Calu3 (cell line): ENCODE measurements at regions of chr2 and their contacts with region 1.

Region 1: GRCh38 chr2:147331790-147332419 is 512.9 kb upstream of the ACVR2A start:
- DNase-seq: peak; percentile 53
- H3K4me3 Mint-ChIP-seq: no peak overlapping the region
- H3K27ac Mint-ChIP-seq: no peak overlapping the region
- H3K4me1 Mint-ChIP-seq: no peaks in the 10 kb centered on the region
- H3K27me3 Mint-ChIP-seq: no peaks in the 10 kb centered on the region
- CTCF ChIP-seq: peak; percentile 34

Region 2: DNA sequence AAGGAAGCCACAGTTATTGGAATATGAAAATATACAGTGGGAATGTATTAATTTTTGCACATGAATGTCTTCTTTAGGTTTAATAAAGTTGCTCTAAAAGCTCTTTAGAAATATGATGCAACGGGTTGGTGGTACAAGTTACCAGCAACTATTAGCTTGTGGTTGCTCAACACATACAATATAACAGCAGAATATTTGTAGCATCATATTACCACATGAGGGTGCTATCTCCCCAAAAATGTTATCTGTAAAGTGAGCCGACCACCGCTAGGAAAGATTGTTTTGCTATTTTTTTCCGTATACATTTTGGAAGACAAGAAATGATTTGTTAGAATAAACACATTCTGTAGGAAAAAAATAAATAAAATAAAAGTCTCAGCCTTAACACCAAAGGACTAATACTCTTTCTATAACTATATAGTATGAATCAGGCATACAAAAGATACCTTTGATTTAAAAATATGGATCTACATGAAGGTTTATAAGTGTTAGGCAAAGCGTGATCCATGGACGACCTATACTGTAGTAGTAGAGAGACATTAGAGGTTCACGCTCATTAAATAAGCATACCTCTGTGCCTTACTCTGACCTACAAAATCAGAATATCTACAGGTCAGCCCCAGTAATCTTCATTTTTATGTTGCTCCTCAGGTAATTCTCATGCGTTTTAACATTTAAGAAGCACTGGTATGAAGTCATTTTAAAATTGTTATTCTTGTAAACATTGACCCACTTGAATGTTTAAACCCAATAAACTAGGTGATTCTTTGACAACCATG is 597.7 kb before region 1 on chr2:
- CTCF ChIA-PET with region 1: interaction called, 4 read pairs
- intact Hi-C with region 1: loop called (anchors 5 kb)
- DNase-seq: peak; percentile 16
- H3K4me3 Mint-ChIP-seq: no peak overlapping the region
- H3K27ac Mint-ChIP-seq: no peak overlapping the region
- H3K4me1 Mint-ChIP-seq: no peaks in the 10 kb centered on the region
- H3K27me3 Mint-ChIP-seq: no peaks in the 10 kb centered on the region
- CTCF ChIP-seq: peak; percentile 49

Region 3: GRCh38 chr2:146786396-146786795 is 545.5 kb before region 1 on chr2:
- CTCF ChIA-PET with region 1: no interaction called
- intact Hi-C with region 1: no loop called
- DNase-seq: no peak
- H3K4me3 Mint-ChIP-seq: no peak overlapping the region
- H3K27ac Mint-ChIP-seq: no peak overlapping the region
- H3K4me1 Mint-ChIP-seq: no peaks in the 10 kb centered on the region
- H3K27me3 Mint-ChIP-seq: no peaks in the 10 kb centered on the region
- CTCF ChIP-seq: no peak

Region 4: DNA sequence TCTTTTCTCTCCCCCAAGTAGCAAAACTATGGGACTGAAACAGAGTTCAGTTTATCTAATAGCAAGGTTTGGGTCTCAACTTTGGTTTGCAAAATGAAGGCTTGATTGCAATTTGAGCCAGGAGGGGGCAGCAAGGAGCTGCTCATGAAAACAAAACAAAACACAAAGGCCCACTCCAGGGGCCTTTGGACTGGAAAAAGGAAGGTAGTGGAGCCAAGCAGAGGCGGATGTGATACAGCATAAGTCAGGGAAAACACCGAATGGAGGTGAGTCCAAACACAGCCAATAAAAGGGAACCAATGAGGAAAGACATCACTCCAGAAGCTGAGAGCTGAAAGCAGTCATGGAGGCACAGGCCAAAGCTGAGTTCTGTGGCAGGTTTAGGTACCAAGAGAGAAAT is 286.8 kb before region 1 on chr2:
- CTCF ChIA-PET with region 1: interaction called, 8 read pairs
- intact Hi-C with region 1: loop called (anchors 1 kb)
- DNase-seq: peak; percentile 77
- H3K4me3 Mint-ChIP-seq: no peak overlapping the region
- H3K27ac Mint-ChIP-seq: peak overlapping the region; percentile 2
- H3K4me1 Mint-ChIP-seq: peaks cover 22% of the 10 kb centered on the region
- H3K27me3 Mint-ChIP-seq: no peaks in the 10 kb centered on the region
- CTCF ChIP-seq: peak; percentile 82

Region 5: DNA sequence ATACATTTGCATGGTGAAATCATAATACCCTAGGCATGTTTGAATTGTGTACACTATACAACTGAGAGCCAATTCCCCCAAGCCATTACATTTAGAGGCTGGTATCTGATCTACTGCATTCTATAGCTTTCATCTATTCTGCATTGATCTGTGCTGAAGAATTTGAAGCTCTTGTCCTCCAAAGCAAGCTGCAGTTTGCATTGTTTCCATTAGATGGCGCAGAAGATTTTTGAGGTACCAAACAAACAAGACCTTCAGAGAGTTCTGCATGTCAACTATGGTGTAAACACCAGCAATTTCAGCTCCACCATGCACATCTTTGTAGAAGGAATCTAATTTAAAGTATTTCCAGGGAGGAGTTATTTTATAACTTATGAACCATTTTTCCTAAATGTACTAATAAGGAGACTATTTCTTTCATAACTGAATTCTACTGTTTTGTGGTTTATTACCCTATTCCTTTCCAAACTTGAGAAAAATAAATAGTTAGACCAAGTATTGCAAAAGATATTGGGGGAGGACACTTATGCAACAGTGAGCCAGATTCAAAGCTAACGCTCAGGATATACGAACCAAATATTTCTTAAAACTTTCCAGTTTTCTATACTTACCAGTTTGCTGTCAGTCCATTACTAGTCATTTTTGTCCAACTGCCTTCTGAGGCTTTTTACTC is 248.9 kb before region 1 on chr2:
- CTCF ChIA-PET with region 1: interaction called, 22 read pairs
- intact Hi-C with region 1: loop called (anchors 1 kb)
- DNase-seq: peak; percentile 68
- H3K4me3 Mint-ChIP-seq: no peak overlapping the region
- H3K27ac Mint-ChIP-seq: no peak overlapping the region
- H3K4me1 Mint-ChIP-seq: peaks cover 16% of the 10 kb centered on the region
- H3K27me3 Mint-ChIP-seq: no peaks in the 10 kb centered on the region
- CTCF ChIP-seq: peak; percentile 76